Activated naive CD4-positive, alpha-beta T cell treated with anti-CD3 and anti-CD28 coated beads for 36 hours (primary cell): ENCODE measurements at regions of chr6 and their contacts with region 1.

Region 1: GRCh38 chr6:138588805-138589434 is 89.6 kb upstream of the NHSL1 start:
- DNase-seq: peak; percentile 73
- H3K4me3 Mint-ChIP-seq: no peak overlapping the region
- H3K27ac Mint-ChIP-seq: no peak overlapping the region
- H3K4me1 Mint-ChIP-seq: peaks cover 29% of the 10 kb centered on the region
- H3K27me3 Mint-ChIP-seq: no peaks in the 10 kb centered on the region

Region 2: DNA sequence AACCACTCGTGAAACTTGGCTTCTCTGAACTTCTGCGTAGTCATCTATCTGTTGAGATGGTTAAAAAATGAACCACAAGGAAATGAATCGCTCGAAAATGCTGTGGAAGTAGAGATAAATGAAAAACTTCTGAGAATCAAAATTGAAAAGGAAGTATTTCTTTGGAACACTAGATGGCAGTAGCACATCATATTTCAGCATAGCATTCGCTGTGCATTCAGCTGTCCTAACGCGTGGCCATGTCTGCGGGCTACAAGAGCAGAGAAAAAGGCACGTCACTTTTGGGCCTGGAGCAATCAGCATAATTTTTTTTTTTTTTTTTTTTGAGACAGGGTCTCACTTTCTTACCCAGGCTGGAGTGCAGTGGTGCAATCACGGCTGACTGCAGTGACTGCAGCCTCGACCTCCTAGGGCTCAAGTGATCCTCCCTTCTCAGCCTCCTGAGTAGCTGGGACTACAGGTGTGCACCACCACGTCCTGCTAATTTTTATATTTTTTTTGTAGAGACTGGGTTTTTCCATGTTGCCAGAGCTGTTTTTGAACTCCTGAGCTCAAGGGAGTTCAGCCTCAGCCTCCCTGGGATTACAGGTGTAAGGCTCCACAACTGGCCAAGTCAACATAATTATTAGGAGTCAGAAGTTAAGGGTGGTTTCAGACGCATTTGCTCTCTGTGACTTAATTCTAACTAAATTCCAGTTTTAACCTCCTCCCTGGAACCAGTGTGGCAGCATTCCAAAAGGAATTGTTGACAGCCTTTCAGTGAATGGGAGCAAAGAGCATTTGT is 472.9 kb before region 1 on chr6:
- CTCF ChIA-PET with region 1: interaction called, 3 read pairs
- intact Hi-C with region 1: loop called (anchors 2 kb)
- DNase-seq: peak; percentile 60
- H3K4me3 Mint-ChIP-seq: no peak overlapping the region
- H3K27ac Mint-ChIP-seq: no peak overlapping the region
- H3K4me1 Mint-ChIP-seq: peaks cover 6% of the 10 kb centered on the region
- H3K27me3 Mint-ChIP-seq: peaks cover 12% of the 10 kb centered on the region

Region 3: GRCh38 chr6:138428944-138429598 is 159.8 kb before region 1 on chr6:
- CTCF ChIA-PET with region 1: interaction called, 3 read pairs
- intact Hi-C with region 1: loop called (anchors 1 kb)
- DNase-seq: no peak
- H3K4me3 Mint-ChIP-seq: no peak overlapping the region
- H3K27ac Mint-ChIP-seq: no peak overlapping the region
- H3K4me1 Mint-ChIP-seq: no peaks in the 10 kb centered on the region
- H3K27me3 Mint-ChIP-seq: peaks cover 2% of the 10 kb centered on the region

Region 4: GRCh38 chr6:138654715-138655634 is 66.1 kb after region 1 on chr6:
- CTCF ChIA-PET with region 1: interaction called, 11 read pairs
- intact Hi-C with region 1: loop called (anchors 1 kb)
- DNase-seq: peak; percentile 76
- H3K4me3 Mint-ChIP-seq: no peak overlapping the region
- H3K27ac Mint-ChIP-seq: peak overlapping the region; percentile 36
- H3K4me1 Mint-ChIP-seq: peaks cover 25% of the 10 kb centered on the region
- H3K27me3 Mint-ChIP-seq: peaks cover 28% of the 10 kb centered on the region

Region 5: DNA sequence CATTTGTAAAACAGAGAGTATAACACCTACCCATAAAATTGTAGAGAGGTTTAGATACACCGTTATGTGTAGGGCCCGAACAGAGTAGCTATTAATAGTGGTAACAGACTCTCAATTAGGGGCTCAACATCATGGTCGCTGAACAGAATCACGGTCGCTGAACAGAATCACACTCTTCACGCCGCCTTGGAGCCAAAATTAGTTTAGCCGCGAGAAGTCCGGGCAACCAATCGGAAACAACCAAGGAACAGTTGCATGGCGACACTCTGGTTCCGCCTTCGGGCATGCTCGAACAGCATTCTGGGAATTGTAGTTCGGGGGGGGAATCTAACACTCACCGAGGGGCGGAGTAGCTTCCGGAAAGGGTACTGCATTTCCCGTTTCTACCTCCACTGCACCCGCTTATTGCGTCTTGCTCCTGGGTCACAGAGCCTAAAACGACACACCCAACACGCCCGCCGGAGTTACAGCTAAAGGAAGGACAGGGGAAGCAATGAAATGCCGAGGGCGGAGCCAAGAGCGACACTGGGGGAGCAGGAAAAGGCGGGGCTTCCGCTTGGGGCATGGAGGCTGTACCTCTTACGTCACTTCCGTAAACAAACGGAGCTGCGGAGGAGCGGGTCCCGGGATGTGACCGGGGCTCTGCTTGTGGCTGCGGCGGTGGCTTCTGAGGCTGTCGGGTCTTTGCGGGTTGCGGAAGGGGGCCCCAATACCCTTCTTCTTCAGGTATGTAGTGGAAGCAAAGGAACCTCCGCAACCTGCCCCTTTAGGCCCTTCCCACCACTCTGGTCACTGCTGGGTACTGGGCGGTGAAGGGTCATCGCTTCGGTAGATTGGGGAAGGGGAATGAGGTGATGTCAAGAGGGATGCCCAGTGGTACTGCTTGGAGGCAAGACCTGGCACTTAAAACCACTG is 184.5 kb after region 1 on chr6 and contains the start of gene CCDC28A:
- CTCF ChIA-PET with region 1: interaction called, 196 read pairs
- intact Hi-C with region 1: loop called (anchors 1 kb)
- DNase-seq: peak; percentile 97
- H3K4me3 Mint-ChIP-seq: peak within 1 kb of the TSS; percentile 98
- H3K27ac Mint-ChIP-seq: peak within 1 kb of the TSS; percentile 100
- H3K4me1 Mint-ChIP-seq: peaks cover 30% of the 10 kb centered on the region
- H3K27me3 Mint-ChIP-seq: no peaks in the 10 kb centered on the region
- total RNA-seq, gene CCDC28A: 18.9 to 19.2 TPM

Region 6: DNA sequence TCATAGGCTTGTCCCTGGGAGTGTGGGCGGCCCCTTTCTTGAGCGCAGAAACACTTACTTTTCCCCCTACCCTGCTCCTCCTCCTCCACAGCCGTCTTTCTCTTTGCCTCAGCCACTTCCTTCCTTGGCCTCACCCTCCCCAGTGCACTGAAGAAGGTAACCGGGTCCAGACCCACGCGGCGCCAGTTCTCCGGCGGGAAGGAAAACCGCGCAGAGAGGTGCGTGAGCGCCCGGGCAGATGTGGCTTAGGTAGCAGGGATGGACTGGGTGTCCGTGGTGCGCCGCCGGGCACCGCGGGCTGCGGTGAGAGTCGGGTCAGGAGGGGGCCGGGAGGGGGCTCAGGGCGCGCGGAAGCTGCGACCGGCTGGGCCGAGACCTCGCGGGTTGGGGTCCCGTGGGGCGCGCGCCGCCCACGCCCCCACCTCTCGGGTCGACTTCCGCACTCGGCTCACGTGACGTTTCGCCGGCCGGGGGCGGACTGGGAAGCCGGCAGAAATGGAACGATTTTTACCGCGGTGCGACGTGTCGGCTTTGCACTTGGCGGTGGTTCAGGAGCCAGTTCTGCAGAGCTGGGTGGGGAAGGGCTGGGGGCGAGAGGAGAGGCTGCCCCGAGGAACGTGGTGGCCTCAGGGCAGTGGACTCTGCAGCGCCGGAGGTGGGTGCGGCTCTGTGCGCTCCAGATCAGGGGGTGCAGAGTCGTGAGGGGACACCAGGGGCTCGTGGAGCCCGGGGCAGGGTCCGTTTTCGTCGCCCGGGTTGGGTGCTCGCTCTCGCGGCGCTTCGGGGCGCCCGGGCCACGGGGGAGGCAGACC is 439.9 kb after region 1 on chr6 and contains the start of gene ABRACL:
- CTCF ChIA-PET with region 1: no interaction called
- intact Hi-C with region 1: loop called (anchors 2 kb)
- DNase-seq: peak; percentile 92
- H3K4me3 Mint-ChIP-seq: no peak within 1 kb of the TSS
- H3K27ac Mint-ChIP-seq: peak within 1 kb of the TSS; percentile 95
- H3K4me1 Mint-ChIP-seq: peaks cover 18% of the 10 kb centered on the region
- H3K27me3 Mint-ChIP-seq: no peaks in the 10 kb centered on the region
- total RNA-seq, gene ABRACL: 185 to 190 TPM

Region 7: GRCh38 chr6:139323511-139324300 is 734.8 kb after region 1 on chr6:
- CTCF ChIA-PET with region 1: no interaction called
- intact Hi-C with region 1: loop called (anchors 1 kb)
- DNase-seq: peak; percentile 88
- H3K4me3 Mint-ChIP-seq: peak overlapping the region; percentile 77
- H3K27ac Mint-ChIP-seq: peak overlapping the region; percentile 97
- H3K4me1 Mint-ChIP-seq: peaks cover 31% of the 10 kb centered on the region
- H3K27me3 Mint-ChIP-seq: no peaks in the 10 kb centered on the region